GM10248 (cell line): ENCODE measurements at regions of chr12 and their contacts with region 1.

Region 1: DNA sequence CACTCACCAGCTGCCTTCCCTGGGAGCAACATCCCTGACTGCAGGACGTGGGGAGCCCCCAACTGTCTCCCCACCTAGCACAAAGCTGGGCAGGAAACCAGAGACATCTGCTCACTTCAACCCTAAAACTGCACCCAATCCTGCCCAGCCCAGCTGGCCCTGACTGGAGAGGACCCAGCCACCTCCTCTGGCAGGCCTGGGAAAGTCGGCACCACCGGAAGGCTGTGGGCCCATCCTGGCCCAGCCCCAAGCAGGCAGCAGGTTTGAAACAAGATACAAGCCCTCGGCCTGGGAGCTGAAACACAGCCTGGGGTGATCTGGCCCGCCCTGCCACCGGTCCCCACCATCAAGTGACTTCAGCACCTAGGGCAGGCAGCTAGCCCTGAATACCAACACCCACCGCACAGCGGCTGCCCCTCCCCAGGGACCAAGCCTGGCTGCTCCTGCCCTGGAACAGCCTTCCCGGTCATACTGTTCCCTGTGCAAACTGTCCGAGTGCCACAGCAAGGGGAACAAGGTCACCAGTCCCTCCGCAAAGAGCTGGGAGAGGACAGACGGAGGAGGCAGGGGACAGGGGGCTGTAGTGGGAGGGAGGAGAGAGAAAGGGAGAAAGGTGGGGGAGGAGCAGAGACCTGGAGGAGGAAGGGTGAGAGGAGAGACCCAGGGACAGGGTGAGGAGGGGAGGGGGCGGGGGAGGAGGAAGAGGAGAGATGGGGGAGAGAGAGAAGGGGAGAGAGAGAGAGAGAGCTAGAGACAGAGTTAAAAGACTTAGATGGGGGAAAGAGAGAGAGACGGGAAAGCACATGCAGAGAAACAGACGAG is 115.7 kb downstream of the RFLNA start:
- DNase-seq: no peak
- CTCF ChIP-seq: no peak

Region 2: DNA sequence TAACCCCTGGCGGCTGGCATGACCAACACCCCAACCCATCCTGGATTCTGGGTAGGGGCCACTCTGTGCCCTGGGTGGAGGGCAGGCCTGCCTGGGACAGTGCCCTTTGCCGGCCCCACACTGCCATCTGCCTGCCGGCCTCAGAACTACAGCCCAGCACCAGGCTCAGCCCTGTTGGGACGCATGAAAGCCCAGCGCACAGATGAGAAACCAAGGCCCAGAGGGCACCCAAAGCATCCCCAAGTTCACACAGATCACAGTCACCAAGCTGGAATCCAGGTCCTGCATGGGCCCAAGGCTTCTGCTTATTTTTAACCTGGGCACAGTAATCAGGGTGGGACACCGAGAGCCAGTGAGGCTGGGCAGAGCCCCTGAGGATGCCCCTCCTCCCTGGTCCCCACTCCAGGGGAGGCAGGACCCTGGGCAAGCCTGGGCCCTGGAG is 89.5 kb before region 1 on chr12:
- CTCF ChIA-PET with region 1: no interaction called
- POLR2A ChIA-PET with region 1: no interaction called
- DNase-seq: peak; percentile 85
- CTCF ChIP-seq: peak; percentile 96

Region 3: DNA sequence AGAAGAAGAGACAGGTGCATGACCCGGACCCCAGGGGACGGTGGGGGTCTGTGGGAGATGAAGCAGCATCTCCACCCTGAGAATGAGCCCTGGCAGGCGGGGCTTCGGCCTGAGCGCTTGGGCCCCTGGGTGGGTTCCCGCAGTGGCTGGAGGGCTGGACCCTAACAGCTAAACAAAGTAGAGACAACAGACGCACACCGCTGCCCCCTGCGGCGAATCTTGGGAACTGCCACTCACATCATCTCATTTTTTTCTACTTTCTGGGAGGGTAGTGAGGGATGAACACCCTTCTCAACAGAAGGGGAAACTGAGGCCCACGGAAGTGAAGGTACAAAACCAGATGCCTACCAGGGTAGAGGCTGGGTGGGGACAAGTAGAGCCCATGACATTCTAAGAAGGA is 10.9 kb before region 1 on chr12:
- CTCF ChIA-PET with region 1: interaction called, 12 read pairs
- POLR2A ChIA-PET with region 1: no interaction called
- DNase-seq: peak; percentile 71
- CTCF ChIP-seq: peak; percentile 43

Region 4: DNA sequence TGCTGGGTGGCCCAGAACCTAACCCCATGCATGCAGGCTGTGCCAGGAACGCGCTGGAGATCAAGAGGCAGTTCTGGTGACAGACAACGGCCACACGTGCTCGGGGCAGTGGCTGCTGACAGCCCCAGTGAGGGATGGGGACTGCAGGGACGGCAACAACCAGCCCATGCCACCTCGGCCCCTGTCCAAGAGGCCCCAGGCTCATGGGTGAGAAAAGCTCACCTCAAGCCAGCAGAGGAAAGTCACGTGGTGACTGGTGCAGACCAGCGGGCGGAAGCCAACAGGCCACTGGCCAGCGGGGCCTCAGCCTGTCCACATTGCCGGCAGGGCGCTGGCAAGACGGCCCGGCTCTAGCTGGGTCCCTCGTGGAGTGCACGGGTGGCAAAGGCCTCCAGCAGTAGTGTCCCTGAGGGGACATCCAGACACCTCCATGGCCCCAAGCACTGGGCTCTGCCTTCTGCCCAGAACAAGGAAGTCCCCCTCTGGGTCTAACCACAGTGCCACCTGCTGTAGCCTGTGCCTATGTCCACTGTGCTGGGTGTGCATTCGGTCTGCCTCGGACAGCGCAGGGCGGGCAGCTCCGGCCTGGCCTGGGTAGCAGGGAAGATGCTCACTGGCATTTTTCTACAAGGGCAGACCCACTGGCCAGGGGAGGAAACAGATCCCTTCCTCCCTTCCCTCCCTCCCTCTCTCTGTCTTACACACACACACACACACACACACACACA is 22.7 kb after region 1 on chr12:
- CTCF ChIA-PET with region 1: no interaction called
- POLR2A ChIA-PET with region 1: no interaction called
- DNase-seq: no peak
- CTCF ChIP-seq: no peak

Region 5: DNA sequence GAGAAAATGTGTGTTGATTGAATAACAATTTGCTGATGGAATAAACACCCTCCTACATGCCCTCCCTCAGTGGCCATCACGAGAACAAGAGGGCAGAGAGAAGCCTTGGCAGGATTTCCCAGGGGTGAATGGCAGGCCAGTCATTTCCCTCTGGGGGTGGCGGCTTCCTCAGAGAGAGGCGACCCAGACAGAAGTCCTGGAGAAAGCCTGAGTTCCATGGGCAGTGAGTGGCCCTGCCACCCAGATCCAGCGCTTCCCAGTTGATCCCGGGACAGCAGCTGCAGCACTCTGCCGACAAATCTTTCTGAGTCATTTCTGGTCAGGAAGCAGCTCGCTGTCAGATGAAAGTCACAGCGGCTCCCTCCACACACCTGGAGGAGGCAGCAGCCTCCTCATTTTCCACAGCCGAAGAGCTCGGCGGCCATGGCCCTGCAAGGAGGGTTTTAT is 330.1 kb after region 1 on chr12:
- CTCF ChIA-PET with region 1: no interaction called
- POLR2A ChIA-PET with region 1: no interaction called
- DNase-seq: peak; percentile 52
- CTCF ChIP-seq: no peak